CD8-positive, alpha-beta T cell (primary cell): ENCODE measurements at regions of chr22 and their contacts with region 1.

Region 1: DNA sequence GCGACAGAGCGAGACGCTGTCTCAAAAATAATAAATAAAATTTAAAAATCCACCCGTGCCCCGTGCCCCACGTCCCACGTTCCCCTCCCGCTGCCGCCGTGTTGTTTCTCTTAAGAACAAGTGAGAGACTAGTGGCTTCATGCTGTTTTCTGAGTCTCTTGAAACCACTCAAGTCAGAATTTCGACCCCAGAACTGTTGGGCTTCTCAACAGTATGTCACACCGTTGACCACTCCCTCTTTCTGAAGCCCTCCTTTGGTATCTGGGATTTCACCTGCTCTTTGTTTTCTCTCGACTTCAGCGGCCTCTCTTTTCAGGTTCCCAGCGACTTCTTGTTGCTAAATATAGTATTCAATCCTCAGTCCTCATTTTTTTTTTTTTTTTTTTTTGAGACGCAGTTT is 974 bp downstream of the PPIL2 start:
- DNase-seq: no peak
- ATAC-seq: no peak
- H3K4me3 ChIP-seq: peak overlapping the region; percentile 93 to 98
- H3K4me3 Mint-ChIP-seq: peak overlapping the region; percentile 99
- H3K27ac ChIP-seq: peak overlapping the region in 1 of 2 experiments; percentile 89
- H3K27ac Mint-ChIP-seq: peak overlapping the region; percentile 97
- H3K4me1 ChIP-seq: peaks cover 15% of the 10 kb centered on the region
- H3K4me1 Mint-ChIP-seq: peaks cover 32% of the 10 kb centered on the region
- H3K27me3 ChIP-seq: no peaks in the 10 kb centered on the region
- H3K27me3 Mint-ChIP-seq: no peaks in the 10 kb centered on the region
- CTCF ChIP-seq: no peak

Region 2: GRCh38 chr22:21629262-21630149 is 37.3 kb before region 1 on chr22 and contains the start of gene YDJC:
- CTCF ChIA-PET with region 1: interaction called, 7 read pairs
- POLR2A ChIA-PET with region 1: interaction called, 9 read pairs
- intact Hi-C with region 1: loop called (anchors 1 to 5 kb)
- DNase-seq: peak; percentile 91 to 97 (median 95)
- ATAC-seq: peak; percentile 84
- H3K4me3 ChIP-seq: peak within 1 kb of the TSS; percentile 92 to 99
- H3K4me3 Mint-ChIP-seq: peak within 1 kb of the TSS; percentile 93
- H3K27ac ChIP-seq: peak within 1 kb of the TSS; percentile 89 to 91
- H3K27ac Mint-ChIP-seq: peak within 1 kb of the TSS; percentile 90
- H3K4me1 ChIP-seq: peaks cover 42% of the 10 kb centered on the region
- H3K4me1 Mint-ChIP-seq: peaks cover 37% of the 10 kb centered on the region
- H3K27me3 ChIP-seq: no peaks in the 10 kb centered on the region
- H3K27me3 Mint-ChIP-seq: no peaks in the 10 kb centered on the region
- CTCF ChIP-seq: peak; percentile 95
- total RNA-seq, gene YDJC: 25.6 to 26.0 TPM

Region 3: GRCh38 chr22:21735200-21736076 is 68.7 kb after region 1 on chr22 and contains the start of gene YPEL1:
- CTCF ChIA-PET with region 1: no interaction called
- POLR2A ChIA-PET with region 1: interaction called, 4 read pairs
- intact Hi-C with region 1: loop called (anchors 2 kb)
- DNase-seq: peak; percentile 92 to 98 (median 96)
- ATAC-seq: peak; percentile 91
- H3K4me3 ChIP-seq: peak within 1 kb of the TSS; percentile 59 to 78
- H3K4me3 Mint-ChIP-seq: peak within 1 kb of the TSS; percentile 91
- H3K27ac ChIP-seq: peak within 1 kb of the TSS; percentile 41 to 75
- H3K27ac Mint-ChIP-seq: peak within 1 kb of the TSS; percentile 88
- H3K4me1 ChIP-seq: peaks cover 12% of the 10 kb centered on the region
- H3K4me1 Mint-ChIP-seq: peaks cover 23% of the 10 kb centered on the region
- H3K27me3 ChIP-seq: no peaks in the 10 kb centered on the region
- H3K27me3 Mint-ChIP-seq: no peaks in the 10 kb centered on the region
- CTCF ChIP-seq: no peak
- total RNA-seq, gene YPEL1: 3.2 to 3.3 TPM